B cell (primary cell): ENCODE measurements at regions of chr18 and their contacts with region 1.

Region 1: DNA sequence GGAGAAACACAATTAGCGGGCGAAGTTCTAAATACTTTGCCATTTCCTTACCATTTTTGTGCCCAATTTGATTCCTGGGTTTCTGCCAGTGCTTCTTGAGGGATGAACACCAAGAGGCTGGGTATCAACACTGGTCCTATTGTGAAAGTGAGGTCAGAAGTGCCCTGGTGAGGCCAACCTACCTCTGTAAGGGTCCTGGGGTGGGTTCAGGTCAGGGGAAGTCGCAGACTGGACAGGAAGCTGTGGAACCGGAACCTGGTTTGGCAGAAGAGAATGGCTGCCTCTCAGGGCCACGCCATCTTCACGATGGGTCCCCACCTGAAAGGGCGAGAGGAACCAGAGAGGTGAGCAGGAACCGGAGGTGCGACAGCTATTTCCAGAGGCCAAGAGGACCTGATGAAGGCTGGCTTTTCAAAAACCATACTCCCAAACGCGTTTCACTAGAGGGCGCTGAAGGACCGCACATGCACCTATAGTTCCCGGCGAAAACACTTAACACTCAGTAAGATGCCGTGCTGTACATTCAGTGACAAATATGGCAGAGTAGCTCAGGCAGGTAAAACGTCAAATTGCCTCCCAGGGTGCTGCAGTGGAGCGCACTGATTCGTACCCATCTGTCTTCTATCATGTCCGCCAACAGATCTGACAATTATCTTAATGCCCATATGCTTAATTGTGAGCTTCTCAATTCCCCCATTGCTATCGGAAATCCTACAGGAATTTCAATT is 275.3 kb upstream of the CCDC68 start:
- DNase-seq: peak; percentile 85
- ATAC-seq: peak; percentile 75
- H3K4me3 ChIP-seq: no peak overlapping the region
- H3K4me3 Mint-ChIP-seq: peak overlapping the region; percentile 24
- H3K27ac ChIP-seq: peak overlapping the region in 1 of 2 donors; percentile 73
- H3K27ac Mint-ChIP-seq: peak overlapping the region; percentile 90
- H3K4me1 ChIP-seq: peaks cover 10 to 17% of the 10 kb centered on the region in 2 donors
- H3K4me1 Mint-ChIP-seq: peaks cover 39% of the 10 kb centered on the region
- H3K27me3 ChIP-seq: no peaks in the 10 kb centered on the region
- H3K27me3 Mint-ChIP-seq: no peaks in the 10 kb centered on the region
- CTCF ChIP-seq: peak; percentile 91

Region 2: GRCh38 chr18:55096261-55096951 is 138.1 kb before region 1 on chr18:
- CTCF ChIA-PET with region 1: no interaction called
- POLR2A ChIA-PET with region 1: no interaction called
- intact Hi-C with region 1: loop called (anchors 10 kb)
- DNase-seq: peak; percentile 47
- ATAC-seq: peak; percentile 69
- H3K4me3 ChIP-seq: no peak overlapping the region
- H3K4me3 Mint-ChIP-seq: peak overlapping the region; percentile 3
- H3K27ac ChIP-seq: no peak overlapping the region
- H3K27ac Mint-ChIP-seq: peak overlapping the region; percentile 39
- H3K4me1 ChIP-seq: peaks cover 18 to 28% of the 10 kb centered on the region in 2 donors
- H3K4me1 Mint-ChIP-seq: peaks cover 41% of the 10 kb centered on the region
- H3K27me3 ChIP-seq: no peaks in the 10 kb centered on the region
- H3K27me3 Mint-ChIP-seq: no peaks in the 10 kb centered on the region
- CTCF ChIP-seq: peak; percentile 11

Region 3: GRCh38 chr18:55251254-55251971 is 16.9 kb after region 1 on chr18:
- CTCF ChIA-PET with region 1: interaction called, 23 read pairs
- POLR2A ChIA-PET with region 1: no interaction called
- intact Hi-C with region 1: loop called (anchors 2 kb)
- DNase-seq: no peak
- ATAC-seq: no peak
- H3K4me3 ChIP-seq: no peak overlapping the region
- H3K4me3 Mint-ChIP-seq: peak overlapping the region; percentile 52
- H3K27ac ChIP-seq: peak overlapping the region in 1 of 2 donors; percentile 31
- H3K27ac Mint-ChIP-seq: peak overlapping the region; percentile 59
- H3K4me1 ChIP-seq: peaks cover 45 to 52% of the 10 kb centered on the region in 2 donors
- H3K4me1 Mint-ChIP-seq: peaks cover 63% of the 10 kb centered on the region
- H3K27me3 ChIP-seq: no peaks in the 10 kb centered on the region
- H3K27me3 Mint-ChIP-seq: no peaks in the 10 kb centered on the region
- CTCF ChIP-seq: no peak

Region 4: DNA sequence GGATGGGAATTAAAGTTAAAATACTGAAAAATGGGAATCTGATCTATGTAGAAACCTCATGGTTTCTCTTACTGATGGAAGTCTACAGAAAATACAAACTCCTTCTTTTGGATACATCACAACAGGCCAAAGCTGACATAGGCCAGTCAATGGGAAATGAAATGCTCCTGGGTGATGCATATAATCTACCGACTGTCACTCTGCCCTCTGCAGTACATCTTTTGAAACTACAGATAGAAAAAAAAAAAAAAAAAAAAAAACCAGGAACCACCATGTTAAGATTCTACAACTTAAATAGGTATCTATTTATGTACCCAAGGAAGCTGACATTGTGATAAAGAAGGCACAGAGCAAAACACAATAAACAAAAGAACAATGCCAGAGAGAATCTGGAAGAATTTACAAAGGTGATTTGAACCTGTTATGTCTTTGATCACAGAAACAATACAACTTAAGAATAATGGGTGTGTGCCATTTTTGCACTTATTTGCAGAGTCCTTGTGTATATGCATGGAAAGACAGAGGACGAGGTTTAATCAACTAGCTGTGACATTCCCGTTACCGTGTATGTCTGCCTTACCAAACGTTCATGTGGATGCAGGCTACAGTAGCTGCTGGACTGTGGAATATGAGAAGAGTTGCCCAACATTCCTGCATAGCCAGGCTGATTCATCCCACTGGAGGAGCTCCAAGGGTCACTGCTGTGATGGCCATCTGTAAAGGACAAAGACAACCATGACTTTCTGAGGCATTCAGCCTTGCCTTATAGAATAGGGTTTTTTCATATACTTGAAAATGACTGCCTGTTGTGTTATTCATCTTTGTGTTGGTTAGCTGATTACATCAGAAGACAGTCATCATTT is 40.7 kb after region 1 on chr18:
- CTCF ChIA-PET with region 1: interaction called, 67 read pairs
- POLR2A ChIA-PET with region 1: no interaction called
- intact Hi-C with region 1: loop called (anchors 1 kb)
- DNase-seq: peak; percentile 52
- ATAC-seq: peak; percentile 53
- H3K4me3 ChIP-seq: no peak overlapping the region
- H3K4me3 Mint-ChIP-seq: no peak overlapping the region
- H3K27ac ChIP-seq: peak overlapping the region in 1 of 2 donors; percentile 70
- H3K27ac Mint-ChIP-seq: peak overlapping the region; percentile 56
- H3K4me1 ChIP-seq: peaks cover 0 to 11% of the 10 kb centered on the region in 2 donors
- H3K4me1 Mint-ChIP-seq: peaks cover 45% of the 10 kb centered on the region
- H3K27me3 ChIP-seq: no peaks in the 10 kb centered on the region
- H3K27me3 Mint-ChIP-seq: no peaks in the 10 kb centered on the region
- CTCF ChIP-seq: peak; percentile 63

Region 5: GRCh38 chr18:55343396-55344073 is 109.0 kb after region 1 on chr18:
- CTCF ChIA-PET with region 1: interaction called, 18 read pairs
- POLR2A ChIA-PET with region 1: no interaction called
- intact Hi-C with region 1: loop called (anchors 5 kb)
- DNase-seq: peak; percentile 56
- ATAC-seq: peak; percentile 65
- H3K4me3 ChIP-seq: no peak overlapping the region
- H3K4me3 Mint-ChIP-seq: no peak overlapping the region
- H3K27ac ChIP-seq: no peak overlapping the region
- H3K27ac Mint-ChIP-seq: no peak overlapping the region
- H3K4me1 ChIP-seq: peaks cover 9 to 14% of the 10 kb centered on the region in 2 donors
- H3K4me1 Mint-ChIP-seq: peaks cover 19% of the 10 kb centered on the region
- H3K27me3 ChIP-seq: no peaks in the 10 kb centered on the region
- H3K27me3 Mint-ChIP-seq: no peaks in the 10 kb centered on the region
- CTCF ChIP-seq: peak; percentile 79

Region 6: DNA sequence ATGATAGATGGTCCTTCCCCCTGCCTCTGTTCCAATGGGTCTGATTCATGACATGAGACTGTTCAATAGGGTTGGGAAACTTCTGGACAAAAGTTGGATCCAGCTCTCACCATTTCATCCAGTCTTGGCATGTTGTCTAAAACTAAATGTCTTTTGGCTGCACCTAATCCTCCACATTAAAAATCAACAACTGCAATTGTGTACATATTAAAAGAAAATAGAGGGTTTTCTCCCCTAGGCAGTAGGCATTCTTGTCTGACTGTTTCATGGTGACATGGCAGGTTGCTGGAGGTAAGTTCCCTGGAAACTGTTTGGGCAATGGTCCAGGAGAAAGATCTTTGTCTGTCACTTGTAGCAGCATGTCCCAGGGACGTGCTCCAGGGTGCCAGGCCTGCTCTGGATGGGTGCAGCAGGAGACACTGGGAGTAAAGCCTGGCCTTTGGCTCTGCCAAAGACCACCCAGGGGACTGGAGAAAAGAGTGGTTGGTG is 217.6 kb after region 1 on chr18:
- CTCF ChIA-PET with region 1: no interaction called
- POLR2A ChIA-PET with region 1: no interaction called
- intact Hi-C with region 1: no loop called
- DNase-seq: no peak
- ATAC-seq: no peak
- H3K4me3 ChIP-seq: no peak overlapping the region
- H3K4me3 Mint-ChIP-seq: no peak overlapping the region
- H3K27ac ChIP-seq: no peak overlapping the region
- H3K27ac Mint-ChIP-seq: no peak overlapping the region
- H3K4me1 ChIP-seq: peaks cover 3 to 4% of the 10 kb centered on the region in 2 donors
- H3K4me1 Mint-ChIP-seq: peaks cover 39% of the 10 kb centered on the region
- H3K27me3 ChIP-seq: no peaks in the 10 kb centered on the region
- H3K27me3 Mint-ChIP-seq: no peaks in the 10 kb centered on the region
- CTCF ChIP-seq: no peak

Region 7: DNA sequence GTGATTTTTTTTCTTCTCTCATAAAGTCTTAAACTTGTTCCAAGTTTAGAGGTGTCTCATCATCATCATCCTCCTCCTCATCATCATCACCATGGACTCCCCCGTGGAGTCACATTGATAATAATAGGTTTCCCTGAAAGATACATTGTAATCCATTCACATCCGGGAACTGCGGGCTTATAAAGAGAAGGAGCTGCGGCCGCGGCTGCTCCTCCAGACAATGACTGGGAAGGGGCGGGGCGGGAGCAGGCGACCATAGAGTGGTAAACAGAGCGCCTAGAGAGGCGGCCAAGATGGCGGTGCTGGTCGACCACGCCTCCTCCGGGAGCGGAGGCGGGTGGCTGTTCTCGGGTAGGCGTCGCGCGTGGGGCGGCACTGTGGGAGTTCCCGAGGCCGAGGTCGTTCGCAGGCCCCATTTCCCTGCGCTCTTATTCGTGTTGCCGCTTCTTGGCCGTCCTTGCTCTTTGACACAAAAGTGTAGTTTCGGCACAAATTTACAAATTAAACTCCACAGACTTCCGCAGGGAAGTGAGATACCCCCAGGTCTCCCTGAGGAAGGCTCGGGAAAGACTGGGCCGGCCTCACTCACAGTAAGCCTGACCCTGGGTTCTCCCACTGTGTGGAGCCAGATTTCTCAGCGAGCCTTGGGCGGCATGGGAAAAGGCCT is 355.2 kb after region 1 on chr18:
- CTCF ChIA-PET with region 1: interaction called, 3 read pairs
- POLR2A ChIA-PET with region 1: interaction called, 9 read pairs
- intact Hi-C with region 1: loop called (anchors 5 kb)
- DNase-seq: peak; percentile 95
- ATAC-seq: peak; percentile 87
- H3K4me3 ChIP-seq: peak overlapping the region; percentile 62 to 90 (median 71)
- H3K4me3 Mint-ChIP-seq: peak overlapping the region; percentile 89
- H3K27ac ChIP-seq: peak overlapping the region; percentile 77 to 82
- H3K27ac Mint-ChIP-seq: peak overlapping the region; percentile 92
- H3K4me1 ChIP-seq: peaks cover 20 to 21% of the 10 kb centered on the region in 2 donors
- H3K4me1 Mint-ChIP-seq: peaks cover 37% of the 10 kb centered on the region
- H3K27me3 ChIP-seq: peaks cover 0 to 6% (median 2%) of the 10 kb centered on the region in 4 experiments
- H3K27me3 Mint-ChIP-seq: peaks cover 15% of the 10 kb centered on the region
- CTCF ChIP-seq: no peak

Region 8: GRCh38 chr18:56748698-56749268 is 1514.3 kb after region 1 on chr18:
- CTCF ChIA-PET with region 1: no interaction called
- POLR2A ChIA-PET with region 1: no interaction called
- intact Hi-C with region 1: no loop called
- DNase-seq: peak; percentile 31
- ATAC-seq: no peak
- H3K4me3 ChIP-seq: no peak overlapping the region
- H3K4me3 Mint-ChIP-seq: no peak overlapping the region
- H3K27ac ChIP-seq: no peak overlapping the region
- H3K27ac Mint-ChIP-seq: no peak overlapping the region
- H3K4me1 ChIP-seq: peaks cover 11 to 15% of the 10 kb centered on the region in 2 donors
- H3K4me1 Mint-ChIP-seq: peaks cover 20% of the 10 kb centered on the region
- H3K27me3 ChIP-seq: no peaks in the 10 kb centered on the region
- H3K27me3 Mint-ChIP-seq: no peaks in the 10 kb centered on the region
- CTCF ChIP-seq: peak; percentile 77